Prostate gland (tissue), 2 donors: ENCODE measurements at regions of chr15 and their contacts with region 1.

Region 1: GRCh38 chr15:32659340-32660155 is 18.0 kb downstream of the SCG5 start:
- DNase-seq: peak; percentile 68
- H3K4me3 ChIP-seq: no peak overlapping the region
- H3K27ac ChIP-seq: peak overlapping the region in 1 of 2 donors; percentile 44
- H3K4me1 ChIP-seq: peaks cover 19% of the 10 kb centered on the region
- H3K27me3 ChIP-seq: no peaks in the 10 kb centered on the region
- CTCF ChIP-seq: no peak
- POLR2A ChIP-seq: no peak

Region 2: DNA sequence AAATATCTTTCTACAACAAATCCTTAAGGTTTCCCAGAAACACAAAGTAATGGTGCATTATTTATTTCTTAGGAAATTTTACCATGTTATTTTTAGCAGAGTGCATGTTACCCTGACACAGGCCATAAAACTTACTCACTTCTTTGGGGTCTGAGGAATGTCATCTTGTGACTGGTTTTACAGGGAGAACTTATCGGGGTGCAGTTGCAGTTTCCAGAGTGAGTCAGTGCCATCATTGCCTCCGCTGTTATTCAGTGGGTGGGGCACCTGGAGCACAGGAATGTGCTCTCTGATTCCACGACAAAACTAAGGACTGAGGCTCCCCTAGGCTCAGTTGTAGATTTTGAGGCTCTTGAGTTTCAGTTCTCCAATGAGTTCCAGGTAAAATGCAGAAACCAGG is 47.2 kb after region 1 on chr15:
- intact Hi-C with region 1: no loop called
- DNase-seq: no peak
- H3K4me3 ChIP-seq: no peak overlapping the region
- H3K27ac ChIP-seq: no peak overlapping the region
- H3K4me1 ChIP-seq: no peaks in the 10 kb centered on the region
- H3K27me3 ChIP-seq: no peaks in the 10 kb centered on the region
- CTCF ChIP-seq: no peak
- POLR2A ChIP-seq: no peak

Region 3: DNA sequence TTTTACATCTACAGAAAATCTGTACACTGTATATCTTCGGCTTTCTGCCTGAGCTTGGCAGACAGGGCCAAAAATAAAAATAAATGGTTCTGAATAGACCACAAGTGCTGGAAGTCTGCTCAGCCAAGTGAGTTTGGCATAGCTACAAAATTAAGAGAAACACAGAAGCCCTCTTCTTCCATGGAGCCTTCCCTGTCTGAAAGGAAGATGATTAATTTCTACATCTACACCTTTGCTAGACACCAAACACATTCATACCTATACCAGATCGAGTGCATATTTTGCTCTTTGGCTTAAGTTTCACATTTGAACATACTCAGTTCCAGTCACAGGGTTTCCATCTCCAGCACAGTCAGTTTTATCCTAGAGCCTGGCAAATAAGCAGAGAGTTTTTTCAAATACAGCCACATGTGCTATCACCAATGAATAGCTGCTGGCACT is 282.9 kb after region 1 on chr15:
- intact Hi-C with region 1: no loop called
- DNase-seq: no peak
- H3K4me3 ChIP-seq: no peak overlapping the region
- H3K27ac ChIP-seq: no peak overlapping the region
- H3K4me1 ChIP-seq: no peaks in the 10 kb centered on the region
- H3K27me3 ChIP-seq: no peaks in the 10 kb centered on the region
- CTCF ChIP-seq: no peak
- POLR2A ChIP-seq: no peak

Region 4: DNA sequence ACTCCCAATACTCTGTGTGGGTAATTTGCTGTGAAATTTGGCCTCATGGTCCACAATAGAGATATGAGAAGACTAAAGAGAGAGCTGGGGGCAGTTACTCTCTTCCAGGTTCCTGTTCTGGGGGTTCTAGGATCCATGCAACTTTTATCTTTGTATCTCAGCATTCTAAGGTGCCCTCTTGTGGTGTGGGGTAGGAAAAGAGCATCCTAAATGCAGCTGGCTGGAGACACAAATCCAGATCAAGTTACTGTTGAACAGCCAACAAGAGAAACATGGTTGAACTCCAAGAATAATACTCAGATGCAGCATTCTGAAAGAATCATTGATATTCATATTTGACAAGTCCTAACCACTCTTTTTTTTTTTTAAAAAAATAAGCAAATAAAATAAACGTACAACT is 296.5 kb after region 1 on chr15:
- intact Hi-C with region 1: loop called (anchors 5 kb)
- DNase-seq: no peak
- H3K4me3 ChIP-seq: no peak overlapping the region
- H3K27ac ChIP-seq: no peak overlapping the region
- H3K4me1 ChIP-seq: peaks cover 2% of the 10 kb centered on the region
- H3K27me3 ChIP-seq: no peaks in the 10 kb centered on the region
- CTCF ChIP-seq: peak in 2 of 4 experiments; percentile 22 to 47
- POLR2A ChIP-seq: no peak

Region 5: DNA sequence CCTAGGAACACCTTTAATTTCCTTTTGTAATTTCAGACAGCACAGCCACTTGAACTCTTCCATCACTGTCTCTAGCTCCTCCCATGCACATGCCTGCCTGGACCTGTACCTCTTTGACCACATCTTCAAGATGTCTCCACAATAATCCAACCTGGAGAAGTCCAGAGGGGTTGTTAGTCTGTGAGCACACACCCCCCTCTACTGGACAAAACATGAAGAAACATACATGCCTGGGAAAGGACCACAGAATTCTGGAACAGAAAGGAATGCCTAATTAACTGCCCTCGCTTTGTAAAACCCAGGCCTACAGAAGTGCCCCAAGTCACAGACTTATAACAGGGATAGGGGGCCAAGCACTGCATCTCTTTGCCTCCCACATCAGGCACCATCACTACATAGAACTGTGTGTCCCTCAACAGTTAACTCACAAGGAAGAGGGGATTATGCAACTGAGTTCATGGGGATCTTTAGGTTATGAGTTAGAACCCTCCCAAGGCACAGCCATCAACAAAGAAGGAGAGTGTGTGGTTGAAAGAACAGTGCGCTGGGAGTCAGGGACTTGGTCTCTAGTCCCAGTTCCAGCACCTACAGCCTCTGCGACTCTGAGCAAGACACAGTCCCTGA is 473.3 kb after region 1 on chr15:
- intact Hi-C with region 1: loop called (anchors 10 kb)
- DNase-seq: peak; percentile 63
- H3K4me3 ChIP-seq: no peak overlapping the region
- H3K27ac ChIP-seq: no peak overlapping the region
- H3K4me1 ChIP-seq: no peaks in the 10 kb centered on the region
- H3K27me3 ChIP-seq: no peaks in the 10 kb centered on the region
- CTCF ChIP-seq: peak; percentile 15 to 81 (median 67)
- POLR2A ChIP-seq: no peak